ENCODE measurements at regions of chr13 and their contacts with region 1.

Region 1: DNA sequence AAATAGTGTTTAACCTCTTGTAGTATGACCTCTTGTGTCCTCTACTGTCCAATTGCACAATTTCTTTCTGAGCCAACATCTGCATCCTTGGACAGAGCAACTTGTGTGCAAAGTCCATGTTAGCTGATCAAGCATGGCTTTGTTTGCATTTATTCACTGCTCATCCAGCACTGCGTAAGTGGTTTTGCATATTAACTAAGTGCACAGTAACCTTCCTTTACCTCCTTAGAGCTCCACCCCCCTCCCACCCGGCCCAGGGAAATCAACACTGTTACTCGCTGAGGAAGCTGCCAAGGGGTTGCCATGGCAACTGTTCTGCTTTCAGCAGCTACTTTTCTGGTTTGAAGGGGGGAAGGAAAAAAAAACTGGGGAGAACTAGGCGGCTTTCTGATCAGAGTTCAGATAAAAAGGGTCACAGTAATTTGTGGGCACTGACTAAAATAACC is 153.5 kb upstream of the KLF12 start:
- DNase-seq: peak; percentile 56
- H3K4me3 ChIP-seq: peak overlapping the region; percentile 33 to 41
- H3K27ac ChIP-seq: peak overlapping the region; percentile 51 to 98; a peak in 3 of 4 replicates
- H3K4me1 ChIP-seq: peaks cover 33 to 42% of the 10 kb centered on the region in 2 experiments
- H3K27me3 ChIP-seq: no peaks in the 10 kb centered on the region
- CTCF ChIP-seq: no peak
- EP300 ChIP-seq: no peak
- RAD21 ChIP-seq: no peak

Region 2: GRCh38 chr13:73722120-73722519 is 565.6 kb before region 1 on chr13:
- CTCF ChIA-PET with region 1: interaction called, 12 read pairs
- POLR2A ChIA-PET with region 1: no interaction called
- DNase-seq: peak; percentile 29
- H3K4me3 ChIP-seq: no peak overlapping the region
- H3K27ac ChIP-seq: no peak overlapping the region
- H3K4me1 ChIP-seq: peaks cover 8 to 10% of the 10 kb centered on the region in 2 experiments; a peak in 3 of 4 replicates
- H3K27me3 ChIP-seq: no peaks in the 10 kb centered on the region
- CTCF ChIP-seq: peak; percentile 59
- EP300 ChIP-seq: 0 out of 4 replicates have a peak, but pooled peaks of 1 of the 2 experiments have one; percentile 16
- RAD21 ChIP-seq: peak; percentile 67

Region 3: DNA sequence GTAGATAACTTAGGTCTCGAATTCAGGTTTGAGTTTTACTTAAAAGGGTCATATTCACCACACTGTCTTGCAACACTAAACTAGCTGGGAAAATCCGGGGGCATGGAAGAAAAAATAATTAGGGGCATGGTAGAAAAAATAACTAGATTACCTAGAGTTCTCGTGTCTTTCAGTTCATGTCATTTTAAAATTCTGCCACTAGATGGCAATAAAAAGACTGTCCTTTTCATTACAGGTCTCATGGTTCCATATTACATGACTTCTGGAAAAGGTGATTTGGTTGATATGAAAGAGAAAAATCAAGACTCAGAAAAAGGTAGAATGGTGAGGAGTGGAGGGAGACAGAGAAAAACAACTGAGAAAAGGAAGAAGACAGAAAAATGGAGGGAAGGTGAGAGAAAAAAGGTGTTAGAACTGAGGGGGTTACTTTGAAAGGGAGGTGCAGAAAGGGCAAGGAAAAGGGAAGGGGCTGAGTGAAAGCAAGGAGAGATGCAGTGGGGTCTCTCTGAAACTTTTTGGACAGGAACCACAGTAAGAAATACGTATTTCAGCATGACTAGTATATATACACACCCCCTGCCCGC is 452.5 kb before region 1 on chr13:
- CTCF ChIA-PET with region 1: interaction called, 29 read pairs
- POLR2A ChIA-PET with region 1: no interaction called
- DNase-seq: peak; percentile 33
- H3K4me3 ChIP-seq: no peak overlapping the region
- H3K27ac ChIP-seq: peak overlapping the region in 1 of 2 experiments; percentile 69; a peak in 2 of 4 replicates
- H3K4me1 ChIP-seq: peaks cover 8 to 9% of the 10 kb centered on the region in 2 experiments; a peak in 3 of 4 replicates
- H3K27me3 ChIP-seq: no peaks in the 10 kb centered on the region
- CTCF ChIP-seq: peak; percentile 76
- EP300 ChIP-seq: no peak
- RAD21 ChIP-seq: peak; percentile 85

Region 4: GRCh38 chr13:74133657-74134201 is 154.0 kb before region 1 on chr13:
- CTCF ChIA-PET with region 1: interaction called, 37 read pairs
- POLR2A ChIA-PET with region 1: interaction called, 19 read pairs
- DNase-seq: peak; percentile 85
- H3K4me3 ChIP-seq: peak overlapping the region; percentile 79 to 88
- H3K27ac ChIP-seq: peak overlapping the region; percentile 92 to 98
- H3K4me1 ChIP-seq: peaks cover 15 to 17% of the 10 kb centered on the region in 2 experiments; a peak in 3 of 4 replicates
- H3K27me3 ChIP-seq: no peaks in the 10 kb centered on the region
- CTCF ChIP-seq: no peak
- EP300 ChIP-seq: no peak; a peak in 1 of 4 replicates
- RAD21 ChIP-seq: peak; percentile 23; the same call in 1 of the 2 replicates

Region 5: DNA sequence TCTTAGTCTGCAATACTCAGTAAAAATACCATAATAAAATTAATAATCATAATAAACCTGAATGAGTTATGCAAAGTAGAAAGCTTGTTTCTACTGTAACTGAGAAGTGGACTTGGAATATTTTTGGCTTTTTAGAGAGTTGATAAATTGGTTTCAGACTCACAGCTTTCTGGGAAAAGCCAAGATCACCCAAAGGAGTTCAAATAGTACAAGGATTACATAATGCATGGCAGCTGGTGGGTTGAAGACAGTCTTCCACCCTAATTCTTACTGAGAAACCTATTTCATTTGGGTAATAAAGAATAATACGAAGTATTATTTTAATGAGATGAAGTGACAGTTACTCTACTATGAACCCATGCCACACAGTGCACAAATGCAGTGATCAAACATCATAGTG is 14.2 kb before region 1 on chr13:
- CTCF ChIA-PET with region 1: interaction called, 17 read pairs
- POLR2A ChIA-PET with region 1: no interaction called
- DNase-seq: no peak
- H3K4me3 ChIP-seq: no peak overlapping the region
- H3K27ac ChIP-seq: no peak overlapping the region; a peak in 1 of 4 replicates
- H3K4me1 ChIP-seq: no peaks in the 10 kb centered on the region; a peak in 1 of 4 replicates
- H3K27me3 ChIP-seq: no peaks in the 10 kb centered on the region
- CTCF ChIP-seq: no peak
- EP300 ChIP-seq: no peak
- RAD21 ChIP-seq: no peak

Region 6: DNA sequence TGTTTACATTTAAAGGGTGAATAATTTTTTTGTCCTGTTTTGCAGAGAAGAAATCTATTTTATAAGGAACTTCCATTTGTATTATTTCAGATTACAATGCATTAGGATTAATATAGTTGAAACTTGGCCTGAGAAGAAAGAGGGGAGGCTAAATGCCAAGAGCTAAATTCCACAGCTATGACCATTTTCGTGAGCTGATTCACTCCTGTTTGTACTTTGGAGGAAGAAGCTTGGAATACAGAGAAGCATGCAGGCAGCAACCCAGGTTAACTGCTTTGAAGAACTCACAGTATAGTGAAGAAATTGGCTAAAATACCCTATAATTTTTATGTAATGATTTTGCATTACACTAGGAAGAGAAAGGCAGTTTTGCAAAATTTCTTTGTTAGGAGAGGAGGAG is 155.9 kb after region 1 on chr13:
- CTCF ChIA-PET with region 1: interaction called, 11 read pairs
- POLR2A ChIA-PET with region 1: no interaction called
- DNase-seq: no peak
- H3K4me3 ChIP-seq: no peak overlapping the region
- H3K27ac ChIP-seq: peak overlapping the region; percentile 41 to 85; a peak in 3 of 4 replicates
- H3K4me1 ChIP-seq: peaks cover 6 to 12% of the 10 kb centered on the region in 2 experiments; a peak in 3 of 4 replicates
- H3K27me3 ChIP-seq: no peaks in the 10 kb centered on the region
- CTCF ChIP-seq: no peak
- EP300 ChIP-seq: peak in 1 of 2 experiments; percentile 14; a peak in 1 of 4 replicates
- RAD21 ChIP-seq: no peak

Region 7: DNA sequence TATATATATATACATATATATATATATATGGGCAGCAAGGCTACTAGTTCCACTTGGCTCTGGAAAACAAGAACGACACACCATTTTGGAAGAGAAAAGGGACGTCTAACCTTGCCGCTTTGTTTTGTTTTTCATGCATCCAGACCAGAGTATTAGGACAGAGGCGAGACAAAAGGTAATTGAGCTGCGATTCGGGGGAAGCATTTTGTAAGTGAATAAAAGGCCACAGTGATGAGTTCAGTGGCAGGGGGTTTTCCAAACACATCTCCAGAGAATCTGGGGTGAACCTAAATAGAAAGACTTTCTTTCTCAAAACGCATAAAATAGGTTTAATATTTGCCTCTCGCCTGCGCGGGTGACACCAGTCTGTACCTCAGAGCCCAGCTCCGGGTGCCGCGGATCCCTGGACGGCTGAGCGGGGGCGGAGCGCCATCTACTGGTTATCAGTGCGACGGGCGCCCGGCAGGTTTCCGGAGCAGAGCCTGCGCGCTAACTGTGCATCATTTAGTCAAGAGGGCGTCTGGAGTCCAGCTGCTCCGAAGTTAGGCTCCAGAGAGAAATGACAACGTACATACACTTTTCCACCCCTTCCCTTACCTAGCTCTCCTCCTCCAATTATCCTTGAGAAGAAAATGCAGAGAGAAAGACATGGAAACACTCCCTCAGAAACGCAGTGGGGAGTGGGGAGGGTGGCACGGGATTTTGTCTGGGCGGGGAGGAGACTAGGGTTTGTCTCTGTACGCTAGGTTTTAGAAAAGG is 931.9 kb after region 1 on chr13:
- CTCF ChIA-PET with region 1: interaction called, 67 read pairs
- POLR2A ChIA-PET with region 1: interaction called, 6 read pairs
- DNase-seq: peak; percentile 89
- H3K4me3 ChIP-seq: peak overlapping the region; percentile 33 to 54; a peak in 3 of 4 replicates
- H3K27ac ChIP-seq: peak overlapping the region in 1 of 2 experiments; percentile 81; a peak in 2 of 4 replicates
- H3K4me1 ChIP-seq: peaks cover 0 to 18% of the 10 kb centered on the region in 2 experiments; a peak in 2 of 4 replicates
- H3K27me3 ChIP-seq: no peaks in the 10 kb centered on the region
- CTCF ChIP-seq: peak; percentile 98
- EP300 ChIP-seq: no peak; a peak in 1 of 4 replicates
- RAD21 ChIP-seq: peak; percentile 94